Thyroid gland (tissue), 4 donors: ENCODE measurements at regions of chr4 and their contacts with region 1.

Region 1: DNA sequence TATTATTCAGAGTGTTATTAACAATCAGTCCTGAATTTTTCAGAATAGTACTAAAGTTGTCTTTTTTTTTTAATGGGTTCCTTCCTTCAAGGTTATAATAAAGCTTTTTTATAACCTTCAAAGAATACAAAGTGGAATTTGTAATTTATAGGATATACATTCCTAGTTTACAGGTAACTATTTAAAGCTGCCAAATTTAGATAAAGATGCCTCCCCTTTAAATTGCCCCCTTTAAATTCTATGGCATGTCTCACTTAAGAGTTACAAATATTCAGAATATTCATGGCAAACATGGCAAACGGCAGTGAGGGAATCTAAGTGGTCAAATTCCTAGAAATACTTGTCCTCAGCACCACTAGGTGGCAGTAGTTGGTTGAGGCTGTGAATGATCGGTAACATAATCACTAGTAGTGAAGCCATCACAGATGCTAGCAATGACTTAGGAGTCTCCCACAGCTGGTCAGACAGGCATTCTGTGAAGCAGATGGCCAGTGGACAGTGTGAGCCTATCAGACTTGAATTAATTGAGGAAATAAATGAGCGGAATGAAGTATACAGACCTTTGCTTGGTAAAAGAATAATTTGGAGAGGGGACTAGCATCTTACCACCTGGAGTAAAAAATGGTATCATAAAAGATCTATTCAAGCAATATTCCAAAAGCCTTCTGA is 86.4 kb downstream of the CBR4 start:
- DNase-seq: peak; percentile 54 to 62
- H3K4me3 ChIP-seq: no peak overlapping the region
- H3K27ac ChIP-seq: peak overlapping the region in 1 of 3 donors; percentile 20
- H3K4me1 ChIP-seq: no peaks in the 10 kb centered on the region
- H3K27me3 ChIP-seq: no peaks in the 10 kb centered on the region
- CTCF ChIP-seq: peak; percentile 40 to 85 (median 77)
- POLR2A ChIP-seq: no peak

Region 2: DNA sequence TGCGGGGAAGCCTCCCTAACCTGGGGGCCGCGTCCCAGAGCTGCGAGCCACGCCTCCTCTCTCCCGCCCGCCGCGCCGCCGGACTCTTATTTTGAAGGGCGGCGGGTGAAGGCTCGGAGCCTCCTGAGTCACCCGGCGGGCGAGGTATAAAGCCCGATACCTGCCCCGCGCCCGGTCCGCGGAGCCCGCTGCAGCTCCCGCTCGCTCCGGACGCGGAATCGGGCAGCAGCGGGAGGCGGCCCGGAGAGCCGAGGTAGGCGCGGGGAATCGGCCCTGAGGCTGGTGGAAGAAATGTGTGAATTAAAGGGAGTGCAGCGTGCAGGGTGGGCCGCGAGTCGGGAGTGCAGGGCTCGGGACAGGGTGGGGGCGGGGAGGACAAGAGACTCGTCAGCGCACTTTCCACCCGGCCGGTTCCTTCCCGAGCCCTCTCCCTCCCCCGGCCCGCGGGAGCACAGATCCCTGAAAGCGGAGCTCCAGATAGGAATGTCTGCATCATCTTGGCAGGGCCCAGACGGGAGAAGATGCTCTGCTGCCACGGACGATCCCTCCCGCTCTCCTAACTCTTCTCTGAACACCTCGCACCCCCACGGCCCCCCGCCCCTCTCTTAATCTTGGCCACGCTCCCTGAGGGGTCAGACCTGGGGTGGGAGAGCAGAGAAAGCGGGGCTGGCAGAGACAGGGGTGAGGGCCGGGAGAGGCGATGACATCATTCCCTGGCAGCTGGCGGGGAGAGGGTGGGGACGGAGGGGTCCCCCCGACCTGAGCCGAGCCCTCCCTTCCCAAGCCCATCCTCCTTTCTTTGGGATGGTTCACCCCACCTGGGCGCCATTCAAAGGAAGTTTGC is 91.5 kb before region 1 on chr4:
- intact Hi-C with region 1: no loop called
- DNase-seq: peak; percentile 86 to 88
- H3K4me3 ChIP-seq: peak overlapping the region; percentile 70 to 92 (median 91)
- H3K27ac ChIP-seq: peak overlapping the region; percentile 79 to 87 (median 86)
- H3K4me1 ChIP-seq: peaks cover 9 to 15% of the 10 kb centered on the region in 2 donors
- H3K27me3 ChIP-seq: no peaks in the 10 kb centered on the region
- CTCF ChIP-seq: peak in 1 of 6 experiments; percentile 18
- POLR2A ChIP-seq: peak; percentile 82 to 96

Region 3: DNA sequence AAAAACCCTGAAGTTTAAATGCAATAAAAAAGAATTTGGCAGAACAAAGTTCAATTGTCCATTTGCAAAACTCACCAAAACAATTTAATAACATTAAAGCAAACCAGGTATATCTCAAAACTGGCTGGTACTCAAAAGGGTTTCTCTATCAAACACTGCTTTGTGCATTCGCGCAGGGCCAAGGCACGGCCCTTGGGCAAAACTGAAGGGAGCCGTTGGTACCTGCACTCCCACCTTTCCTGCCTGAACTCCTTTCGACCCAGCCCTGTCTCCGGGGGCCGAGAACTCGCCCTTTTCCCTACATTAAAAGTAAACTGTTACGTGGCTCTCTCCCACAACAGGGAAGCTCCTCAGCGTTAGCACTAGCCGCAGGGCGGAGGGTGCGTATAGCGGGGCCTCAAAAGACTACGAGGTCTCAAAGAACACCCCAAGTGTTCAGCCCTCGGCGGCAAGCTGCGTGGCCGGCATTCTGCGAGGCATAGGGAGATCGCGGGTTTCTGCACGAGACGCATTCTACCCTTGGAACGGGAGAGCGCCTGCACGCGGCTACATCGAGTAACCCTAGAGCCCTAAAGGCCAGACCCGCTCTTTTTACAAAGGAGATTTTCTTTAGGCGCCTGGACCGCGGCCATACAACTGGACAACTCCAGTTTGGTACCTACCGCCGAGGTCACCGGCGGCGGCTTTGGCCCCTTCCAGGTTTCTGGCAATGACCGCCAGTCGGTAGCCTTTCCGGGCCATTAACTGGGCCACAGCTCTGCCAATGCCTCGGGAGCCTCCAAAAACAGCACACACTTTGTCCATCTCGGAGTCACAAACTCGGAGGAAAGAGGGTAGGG is 85.8 kb after region 1 on chr4:
- intact Hi-C with region 1: loop called (anchors 10 kb)
- DNase-seq: peak; percentile 62 to 65
- H3K4me3 ChIP-seq: peak overlapping the region; percentile 28 to 62 (median 54)
- H3K27ac ChIP-seq: peak overlapping the region; percentile 87 to 99 (median 92)
- H3K4me1 ChIP-seq: peaks cover 26 to 40% of the 10 kb centered on the region in 2 donors
- H3K27me3 ChIP-seq: no peaks in the 10 kb centered on the region
- CTCF ChIP-seq: no peak
- POLR2A ChIP-seq: peak in 1 of 2 donors; percentile 7